ENCODE measurements at regions of chr16 and their contacts with region 1.

Region 1: DNA sequence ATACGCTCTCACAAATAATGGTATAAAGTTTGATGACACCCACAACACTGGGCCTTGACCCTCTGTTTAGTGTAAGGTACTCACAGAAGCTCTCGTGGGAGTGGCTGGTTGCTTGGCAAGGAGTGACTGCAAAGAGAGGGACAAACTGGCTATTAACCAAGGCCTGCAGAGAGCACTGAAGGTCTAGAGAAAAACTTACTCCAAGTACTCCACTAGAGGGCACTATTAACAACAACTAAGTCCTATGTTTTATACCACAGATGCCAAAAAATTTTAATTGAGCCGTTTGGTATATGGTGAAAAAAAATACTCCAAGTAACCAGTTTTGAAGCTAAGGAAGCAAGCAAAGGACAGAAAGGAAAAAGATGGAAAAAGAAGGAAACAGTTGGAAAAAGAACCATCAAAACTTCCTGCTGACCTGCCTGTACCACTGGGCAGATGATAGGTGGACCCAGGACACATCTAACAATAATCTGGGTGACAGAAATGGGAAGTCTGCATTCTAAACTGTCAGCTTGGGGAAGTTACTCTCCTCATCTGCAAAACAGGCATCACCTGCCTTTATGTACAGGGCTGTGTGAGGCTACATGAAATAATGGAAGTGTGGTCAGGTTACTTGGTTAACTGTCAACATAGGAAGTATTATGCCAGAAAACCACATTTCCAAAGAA is 23.2 kb downstream of the DYNC1LI2 start:
- DNase-seq: peak; percentile 63
- H3K4me3 Mint-ChIP-seq: no peak overlapping the region
- H3K27ac Mint-ChIP-seq: no peak overlapping the region
- H3K4me1 Mint-ChIP-seq: peaks cover 7% of the 10 kb centered on the region
- H3K27me3 Mint-ChIP-seq: no peaks in the 10 kb centered on the region
- CTCF ChIP-seq: peak; percentile 53

Region 2: GRCh38 chr16:66457888-66458287 is 270.4 kb before region 1 on chr16:
- CTCF ChIA-PET with region 1: no interaction called
- POLR2A ChIA-PET with region 1: no interaction called
- intact Hi-C with region 1: no loop called
- DNase-seq: no peak
- H3K4me3 Mint-ChIP-seq: no peak overlapping the region
- H3K27ac Mint-ChIP-seq: no peak overlapping the region
- H3K4me1 Mint-ChIP-seq: no peaks in the 10 kb centered on the region
- H3K27me3 Mint-ChIP-seq: peaks cover 20% of the 10 kb centered on the region
- CTCF ChIP-seq: no peak

Region 3: GRCh38 chr16:66696669-66697630 is 31.3 kb before region 1 on chr16 and contains the start of gene CMTM4:
- CTCF ChIA-PET with region 1: interaction called, 10 read pairs
- POLR2A ChIA-PET with region 1: interaction called, 3 read pairs
- intact Hi-C with region 1: no loop called
- DNase-seq: peak; percentile 89
- H3K4me3 Mint-ChIP-seq: peak within 1 kb of the TSS; percentile 79
- H3K27ac Mint-ChIP-seq: peak within 1 kb of the TSS; percentile 69
- H3K4me1 Mint-ChIP-seq: peaks cover 14% of the 10 kb centered on the region
- H3K27me3 Mint-ChIP-seq: no peaks in the 10 kb centered on the region
- CTCF ChIP-seq: peak; percentile 12
- total RNA-seq, gene CMTM4: 27.2 and 36.7 TPM in 2 replicates

Region 4: GRCh38 chr16:66740010-66740409 is 11.8 kb after region 1 on chr16:
- CTCF ChIA-PET with region 1: interaction called, 49 read pairs
- POLR2A ChIA-PET with region 1: interaction called, 4 read pairs
- intact Hi-C with region 1: no loop called
- DNase-seq: peak; percentile 56
- H3K4me3 Mint-ChIP-seq: no peak overlapping the region
- H3K27ac Mint-ChIP-seq: peak overlapping the region; percentile 66
- H3K4me1 Mint-ChIP-seq: peaks cover 32% of the 10 kb centered on the region
- H3K27me3 Mint-ChIP-seq: no peaks in the 10 kb centered on the region
- CTCF ChIP-seq: peak; percentile 58

Region 5: GRCh38 chr16:66751303-66751991 is 23.2 kb after region 1 on chr16 and contains the start of gene DYNC1LI2:
- CTCF ChIA-PET with region 1: interaction called, 25 read pairs
- POLR2A ChIA-PET with region 1: interaction called, 6 read pairs
- intact Hi-C with region 1: no loop called
- DNase-seq: peak; percentile 63
- H3K4me3 Mint-ChIP-seq: peak within 1 kb of the TSS; percentile 79
- H3K27ac Mint-ChIP-seq: peak within 1 kb of the TSS; percentile 92
- H3K4me1 Mint-ChIP-seq: peaks cover 30% of the 10 kb centered on the region
- H3K27me3 Mint-ChIP-seq: no peaks in the 10 kb centered on the region
- CTCF ChIP-seq: peak; percentile 83
- total RNA-seq, gene DYNC1LI2: 97.7 and 106 TPM in 2 replicates

Region 6: DNA sequence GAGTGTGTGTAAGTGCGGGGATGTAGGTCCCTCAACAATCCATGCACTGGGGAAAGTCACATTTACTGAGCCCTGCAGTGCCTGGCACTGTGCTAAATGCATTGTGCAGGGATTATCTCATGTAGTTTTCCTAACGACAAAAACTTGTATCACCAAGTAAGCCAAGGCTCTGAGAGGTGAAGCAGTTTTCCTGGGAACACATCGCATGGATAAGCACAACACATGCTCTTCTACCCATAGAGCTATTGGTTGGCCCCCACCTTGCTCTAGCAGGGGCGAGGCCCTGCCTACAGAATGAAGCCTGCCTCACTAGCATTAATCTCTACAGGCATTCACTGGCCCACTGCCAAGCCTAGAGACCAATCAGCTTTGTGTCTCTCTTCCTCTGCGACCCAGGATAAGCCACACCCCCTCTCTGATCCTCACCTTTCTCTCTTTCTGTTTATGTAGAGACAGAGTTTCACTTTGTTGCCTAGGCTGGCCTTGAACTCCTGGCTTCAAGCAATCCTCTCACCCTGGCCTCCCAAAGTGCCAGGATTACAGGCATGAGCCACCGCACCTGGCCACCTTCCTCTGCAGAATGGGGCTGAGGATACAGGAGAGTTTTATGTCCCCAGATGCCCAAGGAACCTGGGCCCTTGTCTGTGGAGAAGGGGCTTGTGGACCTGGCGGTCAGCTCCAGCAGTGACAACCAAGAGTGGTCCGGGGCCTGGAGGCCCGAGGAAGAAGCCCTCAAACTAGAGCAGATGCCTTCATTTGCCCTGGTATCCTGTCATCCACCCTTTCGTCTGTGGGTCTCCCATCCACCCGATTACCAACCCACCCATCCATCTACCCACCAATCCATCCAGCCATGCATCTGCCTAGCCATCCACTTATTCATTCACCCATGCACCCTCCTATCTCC is 177.6 kb after region 1 on chr16:
- CTCF ChIA-PET with region 1: no interaction called
- POLR2A ChIA-PET with region 1: no interaction called
- intact Hi-C with region 1: no loop called
- DNase-seq: peak; percentile 61
- H3K4me3 Mint-ChIP-seq: no peak overlapping the region
- H3K27ac Mint-ChIP-seq: no peak overlapping the region
- H3K4me1 Mint-ChIP-seq: peaks cover 4% of the 10 kb centered on the region
- H3K27me3 Mint-ChIP-seq: no peaks in the 10 kb centered on the region
- CTCF ChIP-seq: no peak

Measured in MCF 10A (cell line).